H1 (cell line): ENCODE measurements at regions of chr4 and their contacts with region 1.

Region 1: DNA sequence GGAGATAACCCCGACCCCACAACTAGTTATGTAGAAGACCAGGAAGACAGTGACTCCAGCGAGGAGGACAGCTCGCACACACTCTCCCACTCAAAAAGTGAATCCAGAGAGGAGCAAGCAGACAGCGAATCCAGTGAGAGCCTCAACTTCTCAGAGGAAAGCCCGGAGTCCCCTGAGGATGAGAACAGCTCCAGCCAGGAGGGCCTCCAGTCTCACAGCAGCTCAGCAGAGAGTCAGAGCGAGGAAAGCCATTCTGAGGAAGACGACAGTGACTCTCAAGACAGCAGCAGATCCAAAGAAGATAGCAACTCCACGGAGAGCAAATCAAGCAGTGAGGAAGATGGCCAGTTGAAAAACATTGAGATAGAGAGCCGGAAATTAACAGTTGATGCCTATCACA is 12.8 kb downstream of the DMP1 start:
- DNase-seq: no peak
- H3K4me3 ChIP-seq: no peak overlapping the region
- H3K27ac ChIP-seq: no peak overlapping the region
- H3K4me1 ChIP-seq: peaks cover 0 to 2% (median 0%) of the 10 kb centered on the region in 4 experiments; a peak in 1 of 7 replicates
- H3K27me3 ChIP-seq: no peaks in the 10 kb centered on the region
- CTCF ChIP-seq: no peak
- EP300 ChIP-seq: no peak
- POLR2A ChIP-seq: no peak
- RAD21 ChIP-seq: no peak

Region 2: DNA sequence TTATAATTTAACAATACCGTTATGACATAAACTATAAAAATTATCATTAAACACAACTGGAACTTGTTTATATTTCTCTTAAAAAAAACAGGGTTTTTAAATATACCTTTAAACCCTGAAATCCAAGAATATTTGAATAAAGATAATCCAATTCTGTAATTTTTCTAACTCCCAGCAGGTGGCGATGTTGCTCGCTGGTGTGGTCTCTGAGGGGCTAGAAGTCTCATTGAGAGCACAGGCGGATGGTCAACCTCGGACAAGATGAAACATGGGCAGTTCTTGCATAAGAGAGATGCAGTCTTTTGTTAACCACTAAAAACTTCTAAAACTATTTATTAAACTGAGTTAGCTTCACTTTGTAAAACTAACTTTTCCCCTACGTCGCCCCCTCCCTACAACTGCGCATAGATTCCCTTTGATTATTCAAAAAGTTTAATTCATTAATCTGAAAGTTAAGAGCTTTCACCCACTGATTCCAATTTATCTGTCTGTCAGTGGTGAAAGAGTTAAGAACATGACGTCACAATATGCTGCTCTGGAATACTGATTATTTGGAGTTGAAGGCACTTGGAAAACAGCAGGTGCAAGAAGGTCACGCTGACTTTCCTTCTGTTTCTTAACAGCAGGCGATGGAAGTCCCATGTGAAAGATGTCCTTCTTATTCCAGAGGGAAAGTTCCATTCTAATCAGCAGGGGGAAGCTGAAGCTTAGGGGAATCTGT is 16.7 kb after region 1 on chr4:
- CTCF ChIA-PET with region 1: interaction called, 10 read pairs
- POLR2A ChIA-PET with region 1: no interaction called
- DNase-seq: peak; percentile 47 to 68
- H3K4me3 ChIP-seq: peak overlapping the region in 1 of 4 experiments; percentile 44; a peak in 1 of 8 replicates
- H3K27ac ChIP-seq: peak overlapping the region; percentile 66; the same call in 1 of the 2 replicates
- H3K4me1 ChIP-seq: peaks cover 0 to 11% (median 9%) of the 10 kb centered on the region in 4 experiments; a peak in 4 of 7 replicates
- H3K27me3 ChIP-seq: no peaks in the 10 kb centered on the region
- CTCF ChIP-seq: peak; percentile 38 to 85 (median 58)
- EP300 ChIP-seq: peak in 1 of 2 experiments; percentile 97; a peak in 2 of 3 replicates
- POLR2A ChIP-seq: no peak
- RAD21 ChIP-seq: peak; percentile 93 to 96

Region 3: DNA sequence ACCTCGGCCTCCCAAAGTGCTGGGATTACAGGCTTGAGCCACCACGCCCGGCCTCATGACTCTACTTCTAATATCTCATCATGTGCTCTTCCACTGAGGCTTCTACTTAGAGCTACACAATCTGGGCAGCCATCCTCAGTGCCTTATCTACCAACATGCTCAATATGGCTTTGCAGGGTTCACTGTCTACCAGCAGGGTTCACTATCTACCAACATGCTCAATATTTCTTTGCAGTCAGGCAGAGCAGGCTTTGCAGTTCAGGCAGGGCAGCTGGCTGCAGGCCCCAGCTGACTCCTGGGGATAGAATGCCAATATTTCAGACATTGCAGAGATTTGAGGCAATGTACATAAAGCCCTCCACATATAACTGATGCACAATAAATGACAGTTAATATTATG is 392.0 kb after region 1 on chr4:
- CTCF ChIA-PET with region 1: no interaction called
- POLR2A ChIA-PET with region 1: no interaction called
- DNase-seq: no peak
- H3K4me3 ChIP-seq: no peak overlapping the region
- H3K27ac ChIP-seq: no peak overlapping the region
- H3K4me1 ChIP-seq: no peaks in the 10 kb centered on the region; a peak in 1 of 7 replicates
- H3K27me3 ChIP-seq: no peaks in the 10 kb centered on the region
- CTCF ChIP-seq: peak in 2 of 3 experiments; percentile 72 to 79; a peak in 3 of 4 replicates
- EP300 ChIP-seq: no peak
- POLR2A ChIP-seq: no peak
- RAD21 ChIP-seq: peak; percentile 89 to 98